HCT116 (cell line): ENCODE measurements at regions of chr5 and their contacts with region 1.

Region 1: GRCh38 chr5:171850324-171851285 is 65.0 kb downstream of the SMIM23 start:
- DNase-seq: peak; percentile 31
- ATAC-seq: peak; percentile 91
- H3K4me3 ChIP-seq: no peak overlapping the region
- H3K27ac ChIP-seq: no peak overlapping the region
- H3K4me1 ChIP-seq: no peaks in the 10 kb centered on the region
- H3K27me3 ChIP-seq: no peaks in the 10 kb centered on the region
- CTCF ChIP-seq: peak; percentile 62 to 80 (median 66)
- POLR2A ChIP-seq: no peak
- RAD21 ChIP-seq: peak; percentile 76

Region 2: GRCh38 chr5:171630027-171630669 is 220.5 kb before region 1 on chr5:
- CTCF ChIA-PET with region 1: interaction called, 6 read pairs
- POLR2A ChIA-PET with region 1: no interaction called
- RAD21 ChIA-PET with region 1: no interaction called
- intact Hi-C with region 1: loop called (anchors 1 kb)
- DNase-seq: peak; percentile 41
- ATAC-seq: peak; percentile 100
- H3K4me3 ChIP-seq: peak overlapping the region; percentile 17 to 51
- H3K27ac ChIP-seq: no peak overlapping the region
- H3K4me1 ChIP-seq: peaks cover 0 to 14% of the 10 kb centered on the region in 2 experiments; a peak in 2 of 4 replicates
- H3K27me3 ChIP-seq: peaks cover 14% of the 10 kb centered on the region
- CTCF ChIP-seq: peak; percentile 49 to 71 (median 53)
- POLR2A ChIP-seq: no peak
- RAD21 ChIP-seq: peak; percentile 85

Region 3: DNA sequence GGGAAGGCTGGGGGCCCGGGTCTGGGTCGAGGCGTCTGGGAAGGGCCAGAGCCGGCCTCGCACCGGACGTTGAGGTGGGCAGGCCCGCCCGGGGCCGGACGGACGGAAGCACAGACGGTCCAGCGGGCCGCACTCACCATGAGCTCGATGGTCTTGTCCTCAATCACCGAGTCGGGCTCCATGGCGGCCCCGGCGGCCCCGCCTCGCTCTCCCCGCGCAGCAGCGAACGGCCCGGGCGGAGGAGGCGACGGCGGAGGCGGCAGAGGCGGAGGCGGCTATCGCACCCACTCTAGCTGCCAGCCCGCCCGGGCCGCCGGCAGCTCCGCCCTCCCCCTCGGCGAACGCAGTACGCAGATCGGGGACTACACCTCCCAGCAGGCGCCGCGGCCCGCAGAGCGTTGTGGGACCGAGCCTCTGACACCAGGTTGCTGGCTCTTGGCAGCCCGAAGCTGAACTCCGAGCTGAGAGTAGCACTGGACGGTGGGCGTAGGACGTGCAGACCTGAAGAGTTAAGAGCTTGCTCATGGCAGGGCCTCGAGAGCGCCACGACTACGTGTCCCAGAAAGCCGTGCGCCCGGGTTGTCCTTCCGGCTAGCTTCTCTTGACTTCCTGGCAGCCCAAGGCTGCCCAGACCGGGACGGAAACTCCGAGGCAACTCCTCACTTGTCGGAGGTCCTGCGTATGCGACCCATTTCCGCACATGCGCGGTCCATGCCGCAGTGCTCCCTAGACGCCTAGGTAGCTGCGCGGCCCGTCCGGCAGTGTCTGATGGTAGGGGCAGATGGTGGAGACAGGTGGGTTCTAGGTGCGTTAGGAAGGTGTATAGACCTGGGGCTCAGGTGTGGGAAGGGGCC is 155.9 kb after region 1 on chr5 and contains the start of gene FBXW11:
- CTCF ChIA-PET with region 1: no interaction called
- POLR2A ChIA-PET with region 1: no interaction called
- RAD21 ChIA-PET with region 1: no interaction called
- intact Hi-C with region 1: no loop called
- DNase-seq: peak; percentile 95
- ATAC-seq: peak; percentile 90
- H3K4me3 ChIP-seq: peak within 1 kb of the TSS; percentile 78 to 99
- H3K27ac ChIP-seq: peak within 1 kb of the TSS; percentile 97
- H3K4me1 ChIP-seq: peaks cover 9 to 36% of the 10 kb centered on the region in 2 experiments; a peak in 3 of 4 replicates
- H3K27me3 ChIP-seq: no peaks in the 10 kb centered on the region
- CTCF ChIP-seq: no peak
- POLR2A ChIP-seq: peak; percentile 96
- RAD21 ChIP-seq: no peak
- total RNA-seq, gene FBXW11: 52.0 TPM

Region 4: GRCh38 chr5:172044631-172045314 is 194.2 kb after region 1 on chr5:
- CTCF ChIA-PET with region 1: no interaction called
- POLR2A ChIA-PET with region 1: no interaction called
- RAD21 ChIA-PET with region 1: no interaction called
- intact Hi-C with region 1: no loop called
- DNase-seq: no peak
- ATAC-seq: peak; percentile 54; the same call in 1 of the 2 replicates
- H3K4me3 ChIP-seq: no peak overlapping the region
- H3K27ac ChIP-seq: no peak overlapping the region
- H3K4me1 ChIP-seq: no peaks in the 10 kb centered on the region
- H3K27me3 ChIP-seq: no peaks in the 10 kb centered on the region
- CTCF ChIP-seq: 0 out of 6 replicates have a peak, but pooled peaks of 1 of the 3 experiments have one; percentile 7
- POLR2A ChIP-seq: no peak
- RAD21 ChIP-seq: peak; percentile 27; the same call in 1 of the 2 replicates